ENCODE measurements at regions of chr1 and their contacts with region 1.

Region 1: DNA sequence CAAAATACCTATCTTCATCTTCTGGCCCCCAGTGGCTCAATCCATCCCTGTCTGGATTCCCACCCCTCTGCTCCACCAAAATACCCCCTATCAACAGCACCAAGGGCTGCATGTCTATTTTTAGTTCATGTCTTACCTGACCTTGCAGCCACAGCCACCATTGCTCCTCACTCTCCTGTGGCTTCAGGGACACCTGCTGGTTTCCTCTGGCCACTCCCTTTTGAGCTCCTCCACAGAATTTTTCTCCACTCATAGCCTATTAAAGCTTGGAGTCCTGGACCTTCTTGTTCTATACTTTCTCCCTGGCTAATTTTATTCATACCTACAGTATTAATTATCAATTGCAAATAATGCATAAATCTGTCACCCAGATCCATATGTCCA is 125.3 kb upstream of the NGF start:
- DNase-seq: peak in 1 of 2 experiments; percentile 27
- H3K4me3 ChIP-seq: no peak overlapping the region
- H3K4me3 Mint-ChIP-seq: no peak overlapping the region
- H3K27ac Mint-ChIP-seq: no peak overlapping the region
- H3K4me1 ChIP-seq: no peaks in the 10 kb centered on the region
- H3K4me1 Mint-ChIP-seq: no peaks in the 10 kb centered on the region
- H3K27me3 ChIP-seq: no peaks in the 10 kb centered on the region
- H3K27me3 Mint-ChIP-seq: no peaks in the 10 kb centered on the region
- CTCF ChIP-seq: peak in 1 of 2 experiments; percentile 45

Region 2: DNA sequence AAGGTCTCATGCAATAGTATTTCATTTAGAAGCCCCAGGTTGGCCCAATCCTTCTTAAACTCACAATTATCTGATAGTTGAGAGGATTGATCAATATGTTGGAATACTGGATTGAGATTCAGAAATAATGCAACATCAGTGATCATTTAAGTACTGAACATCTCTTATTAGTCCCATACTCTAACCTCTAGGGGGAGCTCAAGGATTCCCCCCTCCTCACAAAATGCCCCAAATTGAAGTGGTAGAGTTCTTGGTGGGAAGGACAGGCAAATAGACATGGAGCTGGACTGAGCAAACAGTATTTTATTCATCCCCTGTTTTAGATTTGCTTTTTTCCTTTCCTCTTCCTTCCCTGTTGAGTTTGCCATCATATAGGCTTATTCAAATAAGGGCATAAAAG is 188.1 kb before region 1 on chr1:
- CTCF ChIA-PET with region 1: interaction called, 3 read pairs
- POLR2A ChIA-PET with region 1: no interaction called
- intact Hi-C with region 1: loop called (anchors 5 kb)
- DNase-seq: no peak
- H3K4me3 ChIP-seq: no peak overlapping the region
- H3K4me3 Mint-ChIP-seq: no peak overlapping the region
- H3K27ac Mint-ChIP-seq: no peak overlapping the region
- H3K4me1 ChIP-seq: no peaks in the 10 kb centered on the region
- H3K4me1 Mint-ChIP-seq: no peaks in the 10 kb centered on the region
- H3K27me3 ChIP-seq: no peaks in the 10 kb centered on the region
- H3K27me3 Mint-ChIP-seq: peaks cover 4% of the 10 kb centered on the region
- CTCF ChIP-seq: peak; percentile 10 to 22

Measured in Caco-2 (cell line).